PC-3 (cell line): ENCODE measurements at regions of chr20 and their contacts with region 1.

Region 1: GRCh38 chr20:13125486-13125885 is 95.6 kb upstream of the ISM1 start:
- DNase-seq: no peak
- ATAC-seq: no peak
- H3K4me3 ChIP-seq: no peak overlapping the region
- H3K27ac ChIP-seq: no peak overlapping the region
- H3K4me1 ChIP-seq: no peaks in the 10 kb centered on the region
- H3K27me3 ChIP-seq: no peaks in the 10 kb centered on the region
- CTCF ChIP-seq: no peak

Region 2: DNA sequence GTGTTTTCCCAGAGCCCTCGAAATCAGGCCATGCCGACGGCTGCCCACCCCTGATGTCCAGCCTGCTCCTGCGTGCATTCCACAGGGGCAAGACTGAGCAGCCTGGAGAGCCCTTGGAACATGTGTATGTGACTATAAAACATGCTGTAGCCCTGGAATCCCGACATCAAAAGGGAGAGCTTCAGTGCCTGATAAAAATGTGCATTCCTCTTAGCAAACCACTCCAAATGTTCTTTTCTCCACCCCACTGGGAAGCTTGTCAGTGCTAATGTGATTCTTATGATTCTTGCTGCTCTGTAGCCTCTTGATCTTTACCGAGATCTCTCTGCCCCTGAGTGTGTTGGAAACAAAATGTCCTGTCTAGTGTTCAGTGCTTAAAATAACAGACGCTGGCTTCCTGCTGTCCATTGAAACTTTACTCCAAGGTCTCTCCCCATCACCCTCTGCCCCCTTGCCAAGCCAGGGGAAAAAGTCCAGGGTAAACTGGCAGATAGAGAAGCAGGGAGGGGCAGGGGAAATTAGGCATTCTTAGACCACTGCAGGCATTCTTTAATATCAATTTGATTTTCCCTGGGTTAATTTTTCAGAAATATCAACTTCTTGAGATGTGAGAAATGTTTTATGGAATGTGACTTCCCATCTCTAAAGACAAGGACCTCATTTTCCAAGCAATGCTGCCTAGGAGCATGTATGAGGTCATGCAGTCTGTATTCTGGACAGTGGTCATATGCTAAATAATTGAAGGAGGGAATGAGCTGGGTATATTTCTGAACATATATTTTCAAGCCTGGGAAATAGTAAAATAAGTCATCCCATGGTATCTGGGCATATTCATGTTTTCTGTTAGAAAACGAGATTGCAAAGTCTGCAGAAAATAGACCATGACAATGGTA is 21.8 kb after region 1 on chr20:
- CTCF ChIA-PET with region 1: no interaction called
- POLR2A ChIA-PET with region 1: no interaction called
- intact Hi-C with region 1: loop called (anchors 1 kb)
- DNase-seq: no peak
- ATAC-seq: no peak
- H3K4me3 ChIP-seq: no peak overlapping the region
- H3K27ac ChIP-seq: no peak overlapping the region
- H3K4me1 ChIP-seq: no peaks in the 10 kb centered on the region
- H3K27me3 ChIP-seq: no peaks in the 10 kb centered on the region; the same call in 1 of the 2 replicates
- CTCF ChIP-seq: no peak